ENCODE measurements at regions of chr15 and their contacts with region 1.

Region 1: GRCh38 chr15:81388436-81388770 is 14.4 kb upstream of the TMC3 start:
- DNase-seq: no peak
- H3K4me3 ChIP-seq: no peak overlapping the region
- H3K27ac ChIP-seq: no peak overlapping the region
- H3K4me1 ChIP-seq: no peaks in the 10 kb centered on the region
- H3K27me3 ChIP-seq: no peaks in the 10 kb centered on the region
- CTCF ChIP-seq: no peak
- EP300 ChIP-seq: no peak
- POLR2A ChIP-seq: no peak
- RAD21 ChIP-seq: no peak

Region 2: GRCh38 chr15:81400640-81401236 is 12.3 kb after region 1 on chr15:
- CTCF ChIA-PET with region 1: interaction called, 15 read pairs
- POLR2A ChIA-PET with region 1: no interaction called
- DNase-seq: no peak
- H3K4me3 ChIP-seq: no peak overlapping the region
- H3K27ac ChIP-seq: no peak overlapping the region
- H3K4me1 ChIP-seq: no peaks in the 10 kb centered on the region
- H3K27me3 ChIP-seq: no peaks in the 10 kb centered on the region
- CTCF ChIP-seq: peak in 2 of 3 experiments; percentile 70 to 77; a peak in 3 of 4 replicates
- EP300 ChIP-seq: no peak
- POLR2A ChIP-seq: no peak
- RAD21 ChIP-seq: peak; percentile 88 to 92

Measured in H1 (cell line).